ENCODE measurements at regions of chr17 and their contacts with region 1.

Region 1: GRCh38 chr17:48259694-48260291 is 152.2 kb downstream of the SNX11 start:
- DNase-seq: no peak
- ATAC-seq: peak; percentile 59
- H3K4me3 ChIP-seq: no peak overlapping the region
- H3K27ac ChIP-seq: no peak overlapping the region
- H3K4me1 ChIP-seq: peaks cover 12 to 55% of the 10 kb centered on the region in 2 experiments
- H3K27me3 ChIP-seq: no peaks in the 10 kb centered on the region
- CTCF ChIP-seq: peak; percentile 84 to 98 (median 91)
- POLR2A ChIP-seq: no peak
- RAD21 ChIP-seq: peak; percentile 94

Region 2: DNA sequence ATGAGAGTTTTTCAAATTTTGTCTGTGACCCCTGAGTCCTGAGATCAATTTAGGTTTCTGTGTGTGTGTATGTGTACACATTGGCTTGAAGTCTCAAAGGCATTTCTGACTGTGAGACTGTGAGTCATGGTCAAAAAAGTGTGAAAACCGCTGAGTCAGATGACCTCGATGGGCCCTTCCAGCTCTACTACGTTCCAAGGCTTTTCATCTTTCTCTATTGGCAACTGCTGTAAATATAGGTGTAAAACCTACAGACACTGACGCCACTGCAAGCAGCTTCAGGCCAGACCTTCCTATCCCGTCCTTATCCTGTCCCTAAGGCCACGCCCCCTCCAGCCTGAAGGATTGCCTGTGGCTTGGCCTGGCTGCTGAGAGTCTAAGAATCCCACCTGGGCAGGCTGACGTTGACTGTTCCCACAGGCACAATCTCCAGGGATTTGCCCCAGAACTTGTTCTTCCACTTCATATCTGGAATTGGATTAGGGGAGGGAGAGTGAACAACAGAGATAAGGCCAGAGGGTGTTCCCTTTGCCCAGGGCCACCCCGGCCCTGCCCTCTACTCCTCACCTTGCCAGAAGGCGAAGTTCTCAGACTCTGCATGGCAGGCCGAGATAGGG is 449.5 kb before region 1 on chr17:
- CTCF ChIA-PET with region 1: no interaction called
- POLR2A ChIA-PET with region 1: no interaction called
- RAD21 ChIA-PET with region 1: no interaction called
- intact Hi-C with region 1: no loop called
- DNase-seq: peak; percentile 93
- ATAC-seq: peak; percentile 92
- H3K4me3 ChIP-seq: peak overlapping the region in 1 of 2 experiments; percentile 7; a peak in 2 of 4 replicates
- H3K27ac ChIP-seq: peak overlapping the region; percentile 53
- H3K4me1 ChIP-seq: peaks cover 25 to 32% of the 10 kb centered on the region in 2 experiments
- H3K27me3 ChIP-seq: no peaks in the 10 kb centered on the region
- CTCF ChIP-seq: no peak
- POLR2A ChIP-seq: no peak
- RAD21 ChIP-seq: no peak

Region 3: DNA sequence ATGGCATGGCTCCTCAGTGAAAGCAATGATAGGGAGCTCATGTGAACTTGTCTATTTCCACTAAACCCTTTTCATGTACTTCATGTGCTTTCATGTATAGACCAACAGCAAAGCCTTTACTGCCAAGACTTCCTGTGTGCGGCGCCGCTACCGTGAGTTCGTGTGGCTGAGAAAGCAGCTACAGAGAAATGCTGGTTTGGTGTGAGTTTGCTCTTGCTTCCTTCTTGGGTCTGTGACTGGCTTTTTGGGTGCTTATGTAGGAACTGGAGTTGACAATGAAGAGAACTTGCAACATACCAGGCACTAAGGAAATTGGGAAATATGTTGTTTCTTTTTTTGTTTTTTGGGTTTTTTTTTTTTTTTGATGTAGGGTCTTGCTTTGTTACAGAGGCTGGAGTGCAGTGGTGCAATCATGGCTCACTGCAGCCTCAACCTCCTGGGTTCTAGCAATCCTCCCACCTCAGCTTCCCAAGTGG is 146.6 kb before region 1 on chr17:
- CTCF ChIA-PET with region 1: no interaction called
- POLR2A ChIA-PET with region 1: no interaction called
- RAD21 ChIA-PET with region 1: no interaction called
- intact Hi-C with region 1: no loop called
- DNase-seq: no peak
- ATAC-seq: no peak
- H3K4me3 ChIP-seq: no peak overlapping the region
- H3K27ac ChIP-seq: no peak overlapping the region
- H3K4me1 ChIP-seq: peaks cover 0 to 9% of the 10 kb centered on the region in 2 experiments; a peak in 2 of 4 replicates
- H3K27me3 ChIP-seq: no peaks in the 10 kb centered on the region
- CTCF ChIP-seq: no peak
- POLR2A ChIP-seq: no peak
- RAD21 ChIP-seq: no peak

Region 4: DNA sequence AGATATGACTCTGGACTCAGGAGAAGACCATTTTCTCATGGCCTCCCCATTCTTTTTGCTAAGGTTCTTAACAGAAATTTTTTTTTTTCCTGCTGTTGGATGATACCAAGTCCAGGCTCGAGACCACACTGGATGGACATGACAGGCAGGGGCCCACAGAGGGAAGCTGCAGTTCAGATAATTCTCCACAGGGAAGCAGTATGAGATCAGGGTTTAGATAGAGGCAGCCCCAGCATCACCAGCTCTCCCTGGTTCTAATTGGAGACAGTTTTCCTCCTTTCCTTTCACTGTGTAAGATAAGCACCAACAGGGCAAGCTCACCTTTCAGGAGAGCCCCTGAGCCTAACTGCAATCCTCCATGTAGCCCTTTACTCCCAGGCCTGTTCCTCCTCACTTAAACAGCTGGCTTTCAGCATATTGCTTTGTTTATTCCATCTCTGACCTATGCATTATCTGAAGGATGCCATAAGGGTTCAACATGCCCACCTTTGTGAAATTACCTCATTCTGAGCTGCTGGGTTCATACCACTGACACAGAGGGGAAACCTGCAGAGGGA is 44.1 kb before region 1 on chr17:
- CTCF ChIA-PET with region 1: interaction called, 122 read pairs
- POLR2A ChIA-PET with region 1: interaction called, 4 read pairs
- RAD21 ChIA-PET with region 1: interaction called, 6 to 9 read pairs
- intact Hi-C with region 1: loop called (anchors 1 kb)
- DNase-seq: peak; percentile 71
- ATAC-seq: peak; percentile 99
- H3K4me3 ChIP-seq: no peak overlapping the region
- H3K27ac ChIP-seq: no peak overlapping the region
- H3K4me1 ChIP-seq: peaks cover 0 to 16% of the 10 kb centered on the region in 2 experiments; a peak in 1 of 4 replicates
- H3K27me3 ChIP-seq: no peaks in the 10 kb centered on the region
- CTCF ChIP-seq: peak; percentile 80 to 94 (median 91)
- POLR2A ChIP-seq: no peak
- RAD21 ChIP-seq: peak; percentile 98

Region 5: GRCh38 chr17:48241131-48241591 is 18.6 kb before region 1 on chr17:
- CTCF ChIA-PET with region 1: interaction called, 336 read pairs
- POLR2A ChIA-PET with region 1: interaction called, 13 read pairs
- RAD21 ChIA-PET with region 1: no interaction called
- intact Hi-C with region 1: no loop called
- DNase-seq: peak; percentile 88
- ATAC-seq: peak; percentile 79
- H3K4me3 ChIP-seq: peak overlapping the region in 1 of 2 experiments; percentile 7; a peak in 1 of 4 replicates
- H3K27ac ChIP-seq: peak overlapping the region; percentile 75
- H3K4me1 ChIP-seq: peaks cover 85 to 100% of the 10 kb centered on the region in 2 experiments
- H3K27me3 ChIP-seq: no peaks in the 10 kb centered on the region
- CTCF ChIP-seq: no peak
- POLR2A ChIP-seq: no peak
- RAD21 ChIP-seq: no peak

Region 6: DNA sequence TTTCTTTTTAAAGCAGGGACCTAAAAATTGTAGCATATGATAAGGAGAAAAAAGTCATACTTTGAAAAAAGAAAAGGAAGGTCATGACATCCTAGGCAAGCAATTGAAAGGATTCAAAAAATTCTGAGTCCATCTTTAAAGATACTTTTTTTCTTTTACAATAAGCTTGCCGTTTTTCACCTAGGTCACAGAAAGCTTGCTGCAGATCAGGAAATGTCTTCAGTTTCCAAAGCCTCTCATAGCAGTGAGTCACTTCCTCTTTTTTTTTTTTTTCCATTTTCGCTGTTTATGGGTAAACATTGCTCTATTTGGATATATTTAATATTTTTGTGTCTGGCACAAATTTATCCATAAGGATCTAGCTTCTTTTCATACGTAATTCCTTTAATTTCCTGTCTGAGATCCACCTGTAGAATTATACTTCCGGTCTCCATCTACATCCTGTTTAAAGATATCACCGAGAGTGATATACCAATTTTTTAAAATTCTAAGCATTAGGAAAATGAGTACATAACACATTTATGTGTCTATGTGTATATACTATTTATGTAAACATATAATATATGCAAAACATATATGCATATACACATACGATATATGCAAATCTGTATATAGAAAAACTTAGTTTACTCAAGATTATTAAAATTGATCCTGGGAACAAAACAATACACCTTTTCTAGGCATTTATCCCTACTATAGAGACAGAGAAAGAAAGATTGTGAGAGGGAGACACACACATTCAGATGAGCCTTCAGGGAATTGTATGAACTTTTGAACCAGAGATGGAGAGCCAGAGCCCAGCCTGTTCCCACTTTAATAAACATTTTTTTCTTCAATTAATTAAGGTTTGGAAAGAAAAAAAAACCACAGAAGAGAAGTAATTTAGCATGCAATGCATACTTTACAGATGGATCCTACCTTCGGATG is 35.8 kb after region 1 on chr17:
- CTCF ChIA-PET with region 1: interaction called, 26 read pairs
- POLR2A ChIA-PET with region 1: no interaction called
- RAD21 ChIA-PET with region 1: no interaction called
- intact Hi-C with region 1: no loop called
- DNase-seq: no peak
- ATAC-seq: no peak
- H3K4me3 ChIP-seq: no peak overlapping the region
- H3K27ac ChIP-seq: no peak overlapping the region
- H3K4me1 ChIP-seq: peaks cover 2 to 25% of the 10 kb centered on the region in 2 experiments; a peak in 3 of 4 replicates
- H3K27me3 ChIP-seq: no peaks in the 10 kb centered on the region
- CTCF ChIP-seq: no peak
- POLR2A ChIP-seq: no peak
- RAD21 ChIP-seq: no peak

Region 7: GRCh38 chr17:48335858-48336500 is 76.2 kb after region 1 on chr17:
- CTCF ChIA-PET with region 1: interaction called, 70 read pairs
- POLR2A ChIA-PET with region 1: no interaction called
- RAD21 ChIA-PET with region 1: no interaction called
- intact Hi-C with region 1: no loop called
- DNase-seq: peak; percentile 78
- ATAC-seq: peak; percentile 85
- H3K4me3 ChIP-seq: no peak overlapping the region
- H3K27ac ChIP-seq: no peak overlapping the region
- H3K4me1 ChIP-seq: peaks cover 0 to 9% of the 10 kb centered on the region in 2 experiments; a peak in 2 of 4 replicates
- H3K27me3 ChIP-seq: no peaks in the 10 kb centered on the region
- CTCF ChIP-seq: peak; percentile 64 to 93 (median 92)
- POLR2A ChIP-seq: no peak
- RAD21 ChIP-seq: peak; percentile 85

Region 8: DNA sequence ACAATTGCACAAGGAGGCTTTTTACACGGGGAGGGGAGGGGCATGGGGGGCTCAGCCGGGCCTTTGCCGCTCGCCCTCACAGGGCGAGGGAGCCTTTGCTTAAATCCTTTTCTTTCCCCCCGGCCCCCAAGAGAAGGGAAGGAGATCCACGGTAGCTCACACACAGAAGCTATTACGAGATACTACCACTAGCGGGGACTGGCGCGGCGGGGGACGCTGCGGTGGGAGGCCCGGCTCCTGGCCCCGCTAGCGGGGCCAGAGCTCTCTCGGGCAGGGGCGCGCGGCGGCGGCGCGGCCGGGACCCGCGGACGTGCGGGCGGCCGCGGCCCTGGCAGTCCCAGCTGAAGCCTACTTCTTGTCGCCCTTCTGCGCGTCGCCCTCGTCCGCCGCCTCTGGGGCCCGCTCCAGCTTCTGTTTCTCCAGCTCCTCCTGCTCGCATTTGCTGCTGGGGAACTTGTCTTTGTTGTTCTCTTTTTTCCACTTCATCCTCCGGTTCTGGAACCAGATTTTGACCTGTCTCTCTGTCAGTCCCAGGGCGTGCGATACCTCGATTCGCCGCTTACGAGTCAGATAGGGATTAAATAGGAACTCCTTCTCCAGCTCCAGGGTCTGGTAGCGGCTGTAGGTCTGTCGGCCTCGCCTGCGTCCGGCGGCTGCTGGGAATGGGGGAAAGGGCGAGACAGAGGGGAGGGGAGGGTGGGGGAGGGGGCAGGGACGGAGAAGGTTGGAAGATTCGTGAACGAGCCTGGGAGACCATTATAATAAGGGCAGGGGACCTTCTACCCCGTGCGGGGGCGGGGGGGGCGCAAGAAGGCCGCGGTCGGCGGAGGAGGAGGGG is 353.3 kb after region 1 on chr17:
- CTCF ChIA-PET with region 1: interaction called, 14 read pairs
- POLR2A ChIA-PET with region 1: interaction called, 6 read pairs
- RAD21 ChIA-PET with region 1: interaction called in 1 of 2 experiments, 4 read pairs
- intact Hi-C with region 1: loop called (anchors 1 kb)
- DNase-seq: no peak
- ATAC-seq: peak; percentile 19
- H3K4me3 ChIP-seq: peak overlapping the region; percentile 80 to 90
- H3K27ac ChIP-seq: peak overlapping the region; percentile 98
- H3K4me1 ChIP-seq: peaks cover 19 to 58% of the 10 kb centered on the region in 2 experiments; a peak in 3 of 4 replicates
- H3K27me3 ChIP-seq: no peaks in the 10 kb centered on the region
- CTCF ChIP-seq: peak in 1 of 3 experiments; percentile 14; a peak in 2 of 6 replicates
- POLR2A ChIP-seq: no peak
- RAD21 ChIP-seq: no peak